ENCODE measurements at regions of chr17 and their contacts with region 1.

Region 1: GRCh38 chr17:38674749-38675615 is at the start of gene EPOP:
- DNase-seq: peak; percentile 97
- H3K4me3 Mint-ChIP-seq: peak within 1 kb of the TSS; percentile 65
- H3K27ac Mint-ChIP-seq: peak within 1 kb of the TSS; percentile 89
- H3K4me1 Mint-ChIP-seq: peaks cover 44% of the 10 kb centered on the region
- H3K27me3 Mint-ChIP-seq: peaks cover 23% of the 10 kb centered on the region
- total RNA-seq, gene EPOP: 52.1 and 54.9 TPM in 2 replicates

Region 2: GRCh38 chr17:38428112-38428642 is 246.8 kb before region 1 on chr17 and contains the start of gene ARHGAP23:
- intact Hi-C with region 1: loop called (anchors 10 kb)
- DNase-seq: peak; percentile 79
- H3K4me3 Mint-ChIP-seq: peak within 1 kb of the TSS; percentile 76
- H3K27ac Mint-ChIP-seq: no peak within 1 kb of the TSS
- H3K4me1 Mint-ChIP-seq: peaks cover 7% of the 10 kb centered on the region
- H3K27me3 Mint-ChIP-seq: peaks cover 44% of the 10 kb centered on the region
- total RNA-seq, gene ARHGAP23: 0.19 and 0.61 TPM in 2 replicates

Region 3: GRCh38 chr17:38687286-38687685 is 12.3 kb after region 1 on chr17:
- intact Hi-C with region 1: no loop called
- DNase-seq: no peak
- H3K4me3 Mint-ChIP-seq: no peak overlapping the region
- H3K27ac Mint-ChIP-seq: peak overlapping the region; percentile 8
- H3K4me1 Mint-ChIP-seq: peaks cover 3% of the 10 kb centered on the region
- H3K27me3 Mint-ChIP-seq: peaks cover 2% of the 10 kb centered on the region

Region 4: DNA sequence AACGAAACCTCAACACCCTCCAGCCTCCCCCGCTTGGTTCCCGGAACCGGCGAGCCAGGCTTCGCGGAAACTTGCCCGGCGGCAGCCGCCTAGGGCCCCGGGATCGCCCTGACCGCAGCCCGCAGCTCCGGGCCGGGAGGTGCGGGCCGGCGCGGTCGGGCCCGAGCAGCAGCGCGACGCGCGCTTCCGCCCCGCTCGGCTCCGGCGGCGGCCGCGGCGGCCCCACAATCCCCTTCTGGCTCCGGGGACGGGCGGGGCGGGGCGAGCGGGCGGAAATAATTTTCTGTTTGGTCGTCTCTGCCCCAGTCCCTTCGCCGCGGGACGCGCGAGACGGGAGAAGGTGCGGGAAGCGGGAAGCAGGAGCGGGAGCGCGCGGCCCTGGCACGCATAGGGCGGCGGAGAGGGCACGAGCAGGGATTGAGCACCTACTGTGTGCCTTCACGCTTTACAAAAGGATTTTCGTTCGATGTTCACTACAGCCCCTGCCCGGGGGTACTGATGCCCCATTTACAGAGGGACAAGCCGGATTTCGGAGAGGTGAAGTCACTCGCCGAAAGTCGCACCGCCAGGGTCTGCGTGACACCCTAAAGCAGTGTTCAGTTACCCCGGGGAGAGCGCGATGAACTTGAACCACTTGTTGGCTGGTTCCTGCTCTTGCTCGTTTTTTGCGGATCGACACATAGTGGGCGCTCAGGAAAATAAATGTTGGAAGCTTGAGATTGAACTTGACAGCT is 27.4 kb after region 1 on chr17:
- intact Hi-C with region 1: loop called (anchors 1 kb)
- DNase-seq: peak; percentile 93
- H3K4me3 Mint-ChIP-seq: peak overlapping the region; percentile 90
- H3K27ac Mint-ChIP-seq: peak overlapping the region; percentile 100
- H3K4me1 Mint-ChIP-seq: peaks cover 47% of the 10 kb centered on the region
- H3K27me3 Mint-ChIP-seq: no peaks in the 10 kb centered on the region

Region 5: GRCh38 chr17:38735161-38735997 is 60.4 kb after region 1 on chr17:
- intact Hi-C with region 1: loop called (anchors 1 kb)
- DNase-seq: peak; percentile 91
- H3K4me3 Mint-ChIP-seq: no peak overlapping the region
- H3K27ac Mint-ChIP-seq: peak overlapping the region; percentile 34
- H3K4me1 Mint-ChIP-seq: peaks cover 43% of the 10 kb centered on the region
- H3K27me3 Mint-ChIP-seq: no peaks in the 10 kb centered on the region

Region 6: GRCh38 chr17:38853292-38854219 is 178.6 kb after region 1 on chr17 and contains the start of gene RPL23:
- intact Hi-C with region 1: loop called (anchors 10 kb)
- DNase-seq: peak; percentile 97
- H3K4me3 Mint-ChIP-seq: peak within 1 kb of the TSS; percentile 91
- H3K27ac Mint-ChIP-seq: peak within 1 kb of the TSS; percentile 98
- H3K4me1 Mint-ChIP-seq: peaks cover 30% of the 10 kb centered on the region
- H3K27me3 Mint-ChIP-seq: no peaks in the 10 kb centered on the region
- total RNA-seq, gene RPL23: 1,994 and 2,005 TPM in 2 replicates

Measured in activated CD4-positive, alpha-beta T cell treated with anti-CD3 and anti-CD28 coated beads, Interleukin-2, amount 10 ng/mL, durations not matched to agents 24 days and 14 days (primary cell).